A549 (cell line): ENCODE measurements at regions of chr3 and their contacts with region 1.

Region 1: GRCh38 chr3:139353920-139354556 is 10.2 kb downstream of the MRPS22 start:
- DNase-seq: peak; percentile 53 to 66
- ATAC-seq: peak; percentile 98 to 99
- H3K4me3 ChIP-seq: no peak overlapping the region
- H3K27ac ChIP-seq: no peak overlapping the region
- H3K4me1 ChIP-seq: no peaks in the 10 kb centered on the region
- CTCF ChIP-seq: peak; percentile 65
- EP300 ChIP-seq: no peak
- POLR2A ChIP-seq: no peak
- RAD21 ChIP-seq: 0 out of 5 replicates have a peak, but pooled peaks of 1 of the 2 experiments have one; percentile 21

Region 2: DNA sequence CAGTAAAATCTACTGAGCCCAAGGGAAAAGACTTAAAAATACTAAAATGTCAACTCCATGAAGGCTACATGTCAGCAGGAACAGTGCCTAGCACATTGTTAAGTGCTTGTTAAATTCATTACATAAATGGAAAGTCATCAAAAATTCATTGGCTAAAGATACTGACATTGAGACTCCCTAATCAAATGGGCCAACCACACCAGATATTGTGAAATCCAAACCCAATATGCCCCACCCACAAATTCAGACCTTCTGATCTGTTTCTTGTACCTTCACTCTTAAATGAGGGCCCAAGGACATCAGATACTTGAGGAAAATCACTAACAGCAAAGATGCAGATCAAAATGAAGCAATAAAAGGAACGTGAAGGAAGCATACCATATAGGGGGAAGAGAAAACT is 10.5 kb after region 1 on chr3:
- CTCF ChIA-PET with region 1: interaction called, 17 read pairs
- POLR2A ChIA-PET with region 1: no interaction called
- DNase-seq: no peak
- ATAC-seq: no peak
- H3K4me3 ChIP-seq: no peak overlapping the region
- H3K27ac ChIP-seq: no peak overlapping the region
- H3K4me1 ChIP-seq: no peaks in the 10 kb centered on the region
- CTCF ChIP-seq: no peak
- EP300 ChIP-seq: no peak
- POLR2A ChIP-seq: no peak
- RAD21 ChIP-seq: no peak